Adrenal gland (tissue), 19 donors: ENCODE measurements at regions of chr9 and their contacts with region 1.

Region 1: GRCh38 chr9:114587385-114588202 is at the start of gene ATP6V1G1:
- DNase-seq: peak; percentile 99 to 100 (median 100)
- H3K4me3 ChIP-seq: peak within 1 kb of the TSS; percentile 20 to 100 (median 82)
- H3K27ac ChIP-seq: peak within 1 kb of the TSS; percentile 57 to 98 (median 95)
- H3K4me1 ChIP-seq: peaks cover 33 to 41% of the 10 kb centered on the region in 2 donors
- H3K27me3 ChIP-seq: no peaks in the 10 kb centered on the region
- CTCF ChIP-seq: peak in 1 of 6 experiments; percentile 9
- POLR2A ChIP-seq: peak; percentile 85 to 97
- total RNA-seq, gene ATP6V1G1: 109 to 375 (median 174) TPM

Region 2: GRCh38 chr9:114505187-114506081 is 82.2 kb before region 1 on chr9 and contains the start of gene WHRN:
- intact Hi-C with region 1: loop called in 1 of 2 experiments (anchors 10 kb)
- DNase-seq: peak; percentile 95 to 98 (median 97)
- H3K4me3 ChIP-seq: peak within 1 kb of the TSS in 3 of 4 donors; percentile 29 to 74 (median 53)
- H3K27ac ChIP-seq: peak within 1 kb of the TSS; percentile 59 to 92 (median 81)
- H3K4me1 ChIP-seq: peaks cover 14 to 16% of the 10 kb centered on the region in 2 donors
- H3K27me3 ChIP-seq: no peaks in the 10 kb centered on the region
- CTCF ChIP-seq: no peak
- POLR2A ChIP-seq: peak; percentile 65 to 95
- total RNA-seq, gene WHRN: 33.4 to 154 (median 92.7) TPM

Region 3: DNA sequence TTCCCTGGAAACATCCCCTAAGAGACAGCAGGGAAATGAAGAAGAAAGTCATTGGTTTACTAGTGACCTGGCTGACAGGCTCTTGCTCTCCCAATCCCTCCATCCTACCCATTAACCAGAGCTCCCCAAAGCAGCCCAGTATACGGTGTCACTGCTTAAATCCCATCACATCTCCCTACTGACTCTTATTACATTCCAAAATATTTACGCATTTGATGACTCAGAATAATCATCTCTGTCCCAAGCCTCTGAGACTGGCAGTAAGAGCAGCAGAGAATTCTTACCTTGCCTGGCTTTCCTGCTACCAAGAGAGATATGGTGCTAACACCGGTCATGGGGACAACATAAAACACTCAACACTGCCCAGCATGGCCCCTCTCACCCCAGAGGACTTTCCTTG is 62.1 kb before region 1 on chr9:
- intact Hi-C with region 1: loop called in 1 of 2 experiments (anchors 10 kb)
- DNase-seq: no peak
- H3K4me3 ChIP-seq: no peak overlapping the region
- H3K27ac ChIP-seq: no peak overlapping the region
- H3K4me1 ChIP-seq: no peaks in the 10 kb centered on the region
- H3K27me3 ChIP-seq: no peaks in the 10 kb centered on the region
- CTCF ChIP-seq: no peak
- POLR2A ChIP-seq: no peak